Cardiac septum (tissue), 1 donor: ENCODE measurements at regions of chr3 and their contacts with region 1.

Region 1: DNA sequence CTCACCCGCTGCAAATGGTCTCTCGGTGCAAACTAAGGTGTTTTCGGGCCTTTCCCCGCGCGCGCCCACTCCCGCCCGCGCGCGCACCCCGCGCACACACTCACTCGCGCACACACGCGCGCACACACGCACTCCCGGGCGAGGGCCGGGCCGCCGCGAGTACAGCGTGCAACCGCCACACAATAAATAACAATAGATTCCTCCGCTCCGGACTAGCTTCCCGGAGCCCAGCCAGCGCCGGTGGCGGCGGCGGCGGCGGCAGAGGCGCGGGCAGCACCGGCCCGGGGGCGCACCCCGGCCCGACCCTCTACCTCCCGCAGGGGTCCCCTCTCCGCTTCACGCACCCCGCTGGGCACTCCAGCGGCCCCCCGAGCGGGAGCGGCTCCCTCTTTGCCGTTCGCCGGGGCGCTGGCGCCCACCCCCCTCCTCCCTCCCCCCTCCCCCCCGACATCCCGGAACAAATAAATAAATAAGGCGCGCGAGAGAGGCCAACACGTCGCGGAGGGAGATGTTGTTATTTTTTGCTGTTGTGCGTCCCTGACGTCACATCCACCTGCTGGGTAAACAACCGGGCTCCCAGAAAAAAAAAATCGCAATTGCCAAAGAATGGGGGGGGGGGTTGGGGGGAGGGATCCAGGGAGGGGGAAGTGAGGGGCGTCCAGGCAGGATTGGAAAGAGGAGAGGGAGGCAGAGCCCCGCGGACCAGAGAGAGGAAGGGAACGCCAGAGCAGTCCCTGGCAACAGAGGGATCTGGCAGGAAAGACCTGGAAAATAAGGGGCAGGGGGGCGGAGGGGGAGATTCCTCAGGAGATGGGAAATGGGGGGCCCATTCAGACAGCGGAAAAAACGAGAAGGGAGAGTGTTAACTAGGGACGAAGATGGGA is at the start of gene FOXP1:
- DNase-seq: peak; percentile 84
- total RNA-seq, gene FOXP1: 53.2 TPM

Region 2: GRCh38 chr3:70550723-70551319 is 1033.0 kb before region 1 on chr3:
- intact Hi-C with region 1: loop called (anchors 5 kb)
- DNase-seq: no peak

Region 3: GRCh38 chr3:71006810-71007785 is 576.7 kb before region 1 on chr3:
- intact Hi-C with region 1: loop called (anchors 1 kb)
- DNase-seq: no peak

Region 4: GRCh38 chr3:71130471-71131374 is 453.1 kb before region 1 on chr3:
- intact Hi-C with region 1: loop called (anchors 2 kb)
- DNase-seq: peak; percentile 86

Region 5: DNA sequence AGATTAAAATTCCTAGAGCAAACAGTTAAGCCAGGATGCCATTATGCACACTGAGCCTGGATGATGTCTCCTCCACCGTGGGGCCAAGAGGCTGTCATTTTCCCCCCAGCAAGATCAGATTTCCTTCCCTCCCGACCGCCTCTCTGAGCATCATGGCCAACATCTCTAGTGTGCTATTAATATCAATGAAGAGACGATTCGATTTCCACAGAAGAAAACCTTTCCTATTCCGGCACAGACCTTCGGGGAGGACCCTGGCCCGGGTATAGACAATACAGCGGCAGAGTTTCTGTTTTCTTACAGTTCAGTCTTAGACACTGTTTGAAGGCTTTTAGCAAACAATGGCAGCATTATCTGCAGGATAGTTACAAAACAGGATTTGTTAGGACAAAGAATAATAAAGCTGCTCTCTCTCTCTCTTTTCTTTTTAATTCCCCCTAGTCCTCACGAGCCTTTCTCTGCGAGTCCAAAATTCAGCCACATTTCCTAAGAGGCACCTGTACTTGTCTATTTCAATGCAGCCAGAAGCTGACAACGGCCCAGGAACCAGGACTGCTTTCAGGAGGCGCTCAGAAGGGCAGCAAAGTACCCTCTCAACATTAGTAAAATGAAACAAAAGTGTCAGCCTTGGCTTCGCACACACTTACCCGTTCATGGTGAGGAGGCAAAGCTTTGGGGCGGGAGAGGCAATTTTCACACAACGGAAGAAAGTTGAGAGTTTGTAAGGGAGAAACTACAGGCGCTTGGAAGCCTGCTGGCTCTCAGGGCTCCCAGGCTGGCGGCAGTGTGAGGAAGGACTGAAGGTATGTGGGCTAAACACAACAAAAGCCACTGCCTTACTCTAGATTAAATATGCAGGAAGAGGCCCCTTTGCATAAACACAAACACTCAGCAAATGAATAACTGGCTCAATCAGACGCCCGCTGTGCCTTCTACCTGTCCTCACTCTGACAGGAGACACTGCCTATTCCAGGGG is 278.3 kb before region 1 on chr3:
- intact Hi-C with region 1: loop called (anchors 2 kb)
- DNase-seq: no peak

Region 6: GRCh38 chr3:71542521-71543370 is 41.1 kb before region 1 on chr3:
- intact Hi-C with region 1: loop called (anchors 2 kb)
- DNase-seq: peak; percentile 92